ENCODE measurements at regions of chr2 and their contacts with region 1.

Region 1: DNA sequence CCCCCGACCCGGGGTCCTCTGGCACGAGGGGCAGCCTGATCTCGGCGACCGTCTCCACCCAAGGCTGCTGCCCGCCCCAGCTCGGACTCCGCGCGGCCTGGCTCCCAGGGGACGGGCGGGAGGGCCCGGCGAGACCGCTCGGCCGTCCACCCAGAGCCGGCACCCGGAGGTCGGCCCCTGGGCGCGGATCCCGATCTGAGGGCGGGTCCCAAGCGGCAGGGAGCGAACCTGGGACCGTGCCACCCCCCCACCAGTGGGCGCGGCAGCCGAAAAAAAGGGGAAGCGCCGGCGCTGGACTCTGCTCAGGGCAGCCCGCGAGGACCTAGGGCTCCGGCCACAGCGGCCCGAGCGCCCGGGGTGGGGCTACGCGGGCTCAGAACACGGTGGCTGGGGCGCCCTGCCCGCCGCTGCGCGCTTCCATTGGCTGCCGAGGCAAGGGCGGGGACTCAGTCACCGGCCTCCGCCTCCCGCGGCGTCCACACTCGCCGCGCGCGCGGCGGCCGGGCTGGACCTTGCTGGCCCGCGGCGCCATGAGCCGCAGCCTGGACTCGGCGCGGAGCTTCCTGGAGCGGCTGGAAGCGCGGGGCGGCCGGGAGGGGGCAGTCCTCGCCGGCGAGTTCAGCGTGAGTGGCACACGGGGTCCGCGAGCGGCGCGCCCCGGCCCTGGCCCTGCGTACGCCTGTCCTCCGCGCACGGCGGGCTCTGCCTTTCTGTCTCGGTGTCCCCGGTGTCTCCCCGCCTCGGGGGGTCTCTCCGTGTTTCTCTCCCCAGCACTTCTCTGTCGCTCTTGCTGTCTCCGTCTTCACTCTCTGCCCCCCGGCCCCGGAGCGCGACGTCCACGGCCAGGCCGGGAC is at the start of gene PTPN18:
- DNase-seq: peak; percentile 83 to 89
- ATAC-seq: peak; percentile 92 to 93
- H3K4me3 ChIP-seq: peak within 1 kb of the TSS; percentile 71 to 87 (median 75)
- H3K27ac ChIP-seq: peak within 1 kb of the TSS; percentile 75 to 88 (median 86)
- H3K4me1 ChIP-seq: peaks cover 13 to 21% of the 10 kb centered on the region in 2 donors
- H3K27me3 ChIP-seq: no peaks in the 10 kb centered on the region
- CTCF ChIP-seq: peak; percentile 58 to 74 (median 72)
- POLR2A ChIP-seq: peak; percentile 86 to 90
- total RNA-seq, gene PTPN18: 3.0 to 15.2 (median 7.0) TPM

Region 2: GRCh38 chr2:130372055-130372832 is 16.4 kb after region 1 on chr2:
- in situ Hi-C with region 1: no loop called
- intact Hi-C with region 1: loop called (anchors 1 kb)
- DNase-seq: peak; percentile 59 to 74
- ATAC-seq: peak; percentile 82 to 85
- H3K4me3 ChIP-seq: peak overlapping the region; percentile 65 to 80 (median 71)
- H3K27ac ChIP-seq: peak overlapping the region; percentile 57 to 80 (median 72)
- H3K4me1 ChIP-seq: peaks cover 0 to 7% of the 10 kb centered on the region in 2 donors
- H3K27me3 ChIP-seq: peaks cover 0 to 3% (median 0%) of the 10 kb centered on the region in 3 donors
- CTCF ChIP-seq: peak; percentile 70 to 89 (median 82)
- POLR2A ChIP-seq: peak; percentile 14 to 19

Region 3: DNA sequence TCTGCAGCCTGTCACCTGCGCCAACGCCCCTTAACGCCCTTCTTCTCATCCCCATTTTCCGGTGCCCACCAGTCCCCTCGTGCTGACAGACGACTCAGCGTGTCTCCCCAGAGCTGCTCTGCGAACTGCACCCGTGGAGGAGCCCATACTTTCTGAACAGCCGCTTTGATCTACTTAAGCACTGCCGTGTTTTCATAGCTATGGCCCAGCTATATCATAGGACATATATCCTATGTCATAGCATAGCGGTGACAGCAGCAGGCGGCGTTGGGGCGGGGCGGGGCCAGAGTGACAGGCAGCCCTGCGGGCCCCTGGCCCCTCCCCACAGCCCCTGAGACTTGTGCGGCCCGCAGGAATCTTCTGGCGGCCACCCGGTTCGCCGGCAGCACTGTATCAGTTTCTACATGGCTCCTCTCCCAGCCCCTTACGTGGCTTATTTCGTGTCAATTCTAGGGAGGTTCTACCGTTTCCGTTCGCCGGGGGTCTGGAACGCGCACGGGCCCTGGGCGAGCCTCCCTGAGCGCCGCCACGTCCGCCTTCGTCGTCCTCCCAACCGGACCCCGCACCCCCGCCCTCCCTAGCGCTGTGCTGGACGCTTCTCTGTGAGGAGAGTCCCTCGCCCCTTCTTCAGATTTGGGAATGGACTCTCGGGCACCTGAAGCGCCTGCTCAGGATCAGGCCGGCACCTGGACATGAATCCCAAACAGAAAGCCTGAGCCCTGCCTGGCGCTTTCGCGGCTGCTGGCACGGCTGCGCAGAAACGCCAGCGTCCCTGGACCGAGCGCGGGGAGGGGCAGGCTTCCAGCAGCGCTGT is 35.5 kb after region 1 on chr2:
- in situ Hi-C with region 1: no loop called
- intact Hi-C with region 1: loop called (anchors 2 kb)
- DNase-seq: peak; percentile 39 to 61
- ATAC-seq: peak; percentile 82 to 84
- H3K4me3 ChIP-seq: peak overlapping the region; percentile 66 to 94 (median 80)
- H3K27ac ChIP-seq: peak overlapping the region; percentile 81 to 89 (median 82)
- H3K4me1 ChIP-seq: peaks cover 9 to 17% of the 10 kb centered on the region in 2 donors
- H3K27me3 ChIP-seq: no peaks in the 10 kb centered on the region
- CTCF ChIP-seq: no peak
- POLR2A ChIP-seq: peak; percentile 16 to 32

Region 4: GRCh38 chr2:131093006-131093695 is 737.3 kb after region 1 on chr2 and contains the start of gene FAM168B:
- in situ Hi-C with region 1: loop called in 1 of 4 experiments (anchors 25 kb)
- intact Hi-C with region 1: no loop called
- DNase-seq: peak; percentile 72 to 87
- ATAC-seq: peak; percentile 94 to 95
- H3K4me3 ChIP-seq: peak within 1 kb of the TSS; percentile 54 to 77 (median 75)
- H3K27ac ChIP-seq: peak within 1 kb of the TSS; percentile 82 to 95 (median 88)
- H3K4me1 ChIP-seq: peaks cover 9 to 17% of the 10 kb centered on the region in 2 donors
- H3K27me3 ChIP-seq: no peaks in the 10 kb centered on the region
- CTCF ChIP-seq: peak in 3 of 5 experiments; percentile 10 to 26 (median 22)
- POLR2A ChIP-seq: peak; percentile 99 to 100
- total RNA-seq, gene FAM168B: 147 to 172 (median 157) TPM

Measured in gastrocnemius medialis (tissue), 4 donors.